ENCODE measurements at regions of chr14 and their contacts with region 1.

Region 1: DNA sequence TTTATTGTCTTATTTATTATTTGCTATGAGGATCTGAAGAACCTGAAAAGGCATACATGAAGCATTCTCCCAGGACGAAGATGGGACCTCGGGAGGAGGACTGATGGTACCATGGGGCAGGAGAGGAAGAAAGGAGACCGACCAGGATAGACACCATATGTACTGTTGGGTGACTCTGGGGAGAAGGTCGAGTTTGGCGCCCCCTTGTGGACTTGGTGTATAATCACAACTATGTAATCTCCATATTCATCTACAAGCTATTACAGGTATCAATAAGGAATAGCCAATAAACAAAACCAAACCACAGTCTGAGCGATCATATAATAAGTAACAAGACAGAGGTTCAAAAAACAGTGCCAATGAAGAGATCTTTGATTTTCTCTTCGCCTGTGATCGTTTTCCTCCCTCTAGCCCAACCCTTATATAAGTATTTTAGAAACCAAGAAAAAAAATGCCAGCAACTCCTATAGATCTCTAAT is 139.1 kb downstream of the SPTSSA start:
- DNase-seq: peak; percentile 69
- H3K4me3 ChIP-seq: no peak overlapping the region
- H3K27ac ChIP-seq: no peak overlapping the region
- H3K4me1 ChIP-seq: no peaks in the 10 kb centered on the region
- CTCF ChIP-seq: peak; percentile 94

Region 2: GRCh38 chr14:34522496-34522895 is 199.5 kb after region 1 on chr14:
- CTCF ChIA-PET with region 1: no interaction called
- POLR2A ChIA-PET with region 1: interaction called, 10 read pairs
- intact Hi-C with region 1: no loop called
- DNase-seq: no peak
- H3K4me3 ChIP-seq: no peak overlapping the region
- H3K27ac ChIP-seq: no peak overlapping the region
- H3K4me1 ChIP-seq: no peaks in the 10 kb centered on the region
- CTCF ChIP-seq: no peak

Measured in OCI-LY7 (cell line).